ENCODE measurements at regions of chr10 and their contacts with region 1.

Region 1: DNA sequence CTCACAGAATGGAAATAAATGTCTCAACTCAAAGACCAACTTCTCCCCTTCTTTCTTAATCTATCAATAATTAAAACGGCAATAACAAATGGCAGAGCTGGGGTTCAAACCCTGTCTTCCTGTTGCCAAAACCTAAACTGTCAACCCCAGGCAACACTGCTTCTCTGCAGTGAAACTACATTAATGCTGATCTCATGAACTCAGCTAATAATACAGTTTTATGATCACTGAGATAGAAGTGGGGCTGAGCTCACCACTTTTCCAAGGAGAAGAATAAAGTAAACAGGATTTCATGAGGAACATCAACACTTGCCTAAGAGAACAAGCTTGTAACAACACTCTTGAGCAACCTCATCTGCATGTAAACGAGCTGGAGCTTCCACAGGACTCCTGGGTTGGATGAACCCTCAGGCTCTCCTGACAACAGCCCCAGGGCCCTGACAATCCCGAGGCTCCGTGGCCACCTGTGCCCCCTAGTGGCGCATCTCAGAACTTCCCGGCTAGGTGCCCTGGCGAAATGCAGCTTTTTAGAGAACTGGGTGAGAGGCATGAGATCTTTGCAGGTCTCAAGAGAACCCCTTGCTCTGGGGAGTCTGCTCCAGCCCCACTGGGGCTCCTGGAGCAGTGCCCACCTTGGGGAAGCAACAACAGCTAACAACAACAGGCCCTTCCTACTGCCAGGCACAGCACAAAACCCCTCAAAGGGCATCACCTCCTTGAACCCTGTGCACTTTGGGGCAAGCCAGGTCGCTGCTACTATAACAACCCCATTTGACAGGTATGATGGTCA is 169.3 kb downstream of the SH3PXD2A start:
- DNase-seq: peak; percentile 73
- H3K4me3 ChIP-seq: no peak overlapping the region
- H3K27ac ChIP-seq: no peak overlapping the region
- H3K4me1 ChIP-seq: peaks cover 9% of the 10 kb centered on the region
- H3K27me3 ChIP-seq: no peaks in the 10 kb centered on the region
- CTCF ChIP-seq: peak; percentile 97

Region 2: GRCh38 chr10:103598654-103599115 is 87.4 kb before region 1 on chr10:
- intact Hi-C with region 1: loop called (anchors 5 kb)
- DNase-seq: no peak
- H3K4me3 ChIP-seq: no peak overlapping the region
- H3K27ac ChIP-seq: peak overlapping the region; percentile 40
- H3K4me1 ChIP-seq: peaks cover 25% of the 10 kb centered on the region
- H3K27me3 ChIP-seq: no peaks in the 10 kb centered on the region
- CTCF ChIP-seq: peak; percentile 71

Measured in left ventricle myocardium inferior (tissue), 1 donor.